PC-3 (cell line): ENCODE measurements at regions of chr10 and their contacts with region 1.

Region 1: GRCh38 chr10:43287056-43288007 is 20.5 kb upstream of the RASGEF1A start:
- DNase-seq: peak; percentile 95
- ATAC-seq: peak; percentile 98
- H3K4me3 ChIP-seq: peak overlapping the region; percentile 10; the same call in 1 of the 2 replicates
- H3K27ac ChIP-seq: peak overlapping the region; percentile 25
- H3K4me1 ChIP-seq: peaks cover 18% of the 10 kb centered on the region
- H3K27me3 ChIP-seq: peaks cover 8% of the 10 kb centered on the region
- CTCF ChIP-seq: no peak

Region 2: GRCh38 chr10:43145311-43145710 is 142.0 kb before region 1 on chr10:
- CTCF ChIA-PET with region 1: no interaction called
- POLR2A ChIA-PET with region 1: no interaction called
- intact Hi-C with region 1: loop called (anchors 10 kb)
- DNase-seq: no peak
- ATAC-seq: no peak
- H3K4me3 ChIP-seq: no peak overlapping the region
- H3K27ac ChIP-seq: no peak overlapping the region
- H3K4me1 ChIP-seq: peaks cover 8% of the 10 kb centered on the region
- H3K27me3 ChIP-seq: no peaks in the 10 kb centered on the region
- CTCF ChIP-seq: no peak

Region 3: GRCh38 chr10:43255634-43256431 is 31.5 kb before region 1 on chr10:
- CTCF ChIA-PET with region 1: no interaction called
- POLR2A ChIA-PET with region 1: no interaction called
- intact Hi-C with region 1: no loop called
- DNase-seq: peak; percentile 48
- ATAC-seq: peak; percentile 62
- H3K4me3 ChIP-seq: no peak overlapping the region
- H3K27ac ChIP-seq: no peak overlapping the region
- H3K4me1 ChIP-seq: no peaks in the 10 kb centered on the region; the same call in 1 of the 2 replicates
- H3K27me3 ChIP-seq: no peaks in the 10 kb centered on the region
- CTCF ChIP-seq: peak; percentile 80

Region 4: GRCh38 chr10:43361986-43362839 is 74.9 kb after region 1 on chr10:
- CTCF ChIA-PET with region 1: no interaction called
- POLR2A ChIA-PET with region 1: no interaction called
- intact Hi-C with region 1: no loop called
- DNase-seq: peak; percentile 47
- ATAC-seq: peak; percentile 77
- H3K4me3 ChIP-seq: peak overlapping the region; percentile 15; the same call in 1 of the 2 replicates
- H3K27ac ChIP-seq: no peak overlapping the region
- H3K4me1 ChIP-seq: peaks cover 7% of the 10 kb centered on the region; the same call in 1 of the 2 replicates
- H3K27me3 ChIP-seq: no peaks in the 10 kb centered on the region
- CTCF ChIP-seq: peak; percentile 47